Right ventricle myocardium inferior (tissue), 1 donor: ENCODE measurements at regions of chr5 and their contacts with region 1.

Region 1: DNA sequence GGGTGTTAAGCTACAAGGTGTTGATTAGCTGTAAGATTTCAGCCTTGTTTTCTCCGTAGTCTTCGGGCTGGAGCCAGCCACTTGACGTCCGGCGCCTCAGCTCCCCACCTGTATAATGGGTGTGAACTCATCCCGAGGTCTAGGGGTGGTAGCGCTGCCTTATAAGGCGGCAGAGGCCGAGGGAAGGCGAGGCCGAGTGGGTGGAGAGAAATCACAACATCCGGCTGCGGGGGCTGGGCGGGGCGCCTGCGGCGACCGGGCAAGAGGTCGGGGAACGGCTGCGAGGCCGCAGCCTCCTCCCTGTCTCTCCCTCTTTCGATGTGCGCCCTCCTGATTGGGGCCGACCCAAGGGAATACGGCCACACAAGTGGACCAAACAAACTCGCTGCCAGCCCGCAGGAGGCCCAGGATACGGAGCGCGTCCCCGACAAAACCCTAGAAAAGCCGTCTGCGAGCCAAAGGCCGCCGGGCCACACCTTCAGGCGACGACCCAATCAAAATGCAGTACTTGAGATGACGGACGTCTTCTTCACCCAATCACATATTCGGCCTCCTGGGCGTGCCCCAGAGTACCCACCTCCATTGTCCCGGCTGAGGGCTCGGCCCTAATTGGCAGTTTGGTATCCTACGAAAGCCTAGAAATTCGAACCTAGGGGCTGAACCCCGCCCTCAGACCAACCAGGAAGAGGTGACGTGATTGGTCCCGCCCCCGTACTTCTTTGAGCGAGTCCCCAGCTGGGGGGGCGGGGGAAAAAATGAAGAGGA is 493 bp upstream of the GRK6 start:
- DNase-seq: peak; percentile 100
- ATAC-seq: peak; percentile 98

Region 2: DNA sequence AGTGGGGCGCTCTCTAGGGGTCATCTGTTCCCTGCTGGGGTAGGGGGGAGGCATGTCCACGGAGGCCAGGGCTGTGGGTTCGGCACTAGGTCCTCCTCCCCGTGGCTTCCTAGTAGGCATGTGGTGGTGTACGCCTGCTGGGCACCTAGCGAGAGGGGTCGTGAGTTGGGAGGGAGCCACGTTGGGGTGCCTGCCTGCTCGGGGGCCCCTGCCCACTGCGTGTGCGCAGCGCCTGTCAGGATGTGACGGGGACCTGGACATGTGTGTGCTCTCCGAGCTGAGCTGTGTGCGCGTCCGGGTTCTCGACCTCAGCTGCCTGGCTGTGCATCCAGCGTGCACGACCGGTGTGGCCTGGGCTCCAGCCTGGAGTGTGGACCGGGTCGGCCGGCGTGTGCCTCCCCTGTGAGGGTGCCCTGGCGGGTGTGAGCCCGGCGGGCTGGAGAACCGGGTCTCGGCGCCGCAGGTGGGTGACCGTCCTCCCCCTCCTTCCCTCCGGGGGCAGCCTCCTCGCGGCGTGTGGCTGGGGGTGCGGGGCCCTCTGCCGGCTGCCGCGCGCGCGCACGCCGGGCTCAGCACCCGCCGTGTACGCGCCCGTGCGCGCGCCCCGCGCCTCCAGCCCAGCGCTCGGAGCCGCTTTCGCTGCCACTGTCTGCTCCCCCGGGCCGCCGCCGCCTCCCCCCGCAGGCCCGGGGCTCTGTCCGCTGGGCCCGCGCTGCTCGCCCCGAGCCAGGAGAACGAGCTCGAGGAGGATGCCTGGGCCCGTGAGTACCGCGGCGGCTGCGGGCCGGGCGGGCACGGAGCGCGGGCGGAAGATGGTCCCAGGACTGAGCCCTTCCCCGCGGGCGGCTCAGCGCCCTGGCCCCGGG is 20.4 kb after region 1 on chr5 and contains the start of gene PRR7:
- intact Hi-C with region 1: loop called (anchors 1 kb)
- DNase-seq: peak; percentile 76
- ATAC-seq: peak; percentile 52
- total RNA-seq, gene PRR7: 1.4 TPM